ENCODE measurements at regions of chr7 and their contacts with region 1.

Region 1: DNA sequence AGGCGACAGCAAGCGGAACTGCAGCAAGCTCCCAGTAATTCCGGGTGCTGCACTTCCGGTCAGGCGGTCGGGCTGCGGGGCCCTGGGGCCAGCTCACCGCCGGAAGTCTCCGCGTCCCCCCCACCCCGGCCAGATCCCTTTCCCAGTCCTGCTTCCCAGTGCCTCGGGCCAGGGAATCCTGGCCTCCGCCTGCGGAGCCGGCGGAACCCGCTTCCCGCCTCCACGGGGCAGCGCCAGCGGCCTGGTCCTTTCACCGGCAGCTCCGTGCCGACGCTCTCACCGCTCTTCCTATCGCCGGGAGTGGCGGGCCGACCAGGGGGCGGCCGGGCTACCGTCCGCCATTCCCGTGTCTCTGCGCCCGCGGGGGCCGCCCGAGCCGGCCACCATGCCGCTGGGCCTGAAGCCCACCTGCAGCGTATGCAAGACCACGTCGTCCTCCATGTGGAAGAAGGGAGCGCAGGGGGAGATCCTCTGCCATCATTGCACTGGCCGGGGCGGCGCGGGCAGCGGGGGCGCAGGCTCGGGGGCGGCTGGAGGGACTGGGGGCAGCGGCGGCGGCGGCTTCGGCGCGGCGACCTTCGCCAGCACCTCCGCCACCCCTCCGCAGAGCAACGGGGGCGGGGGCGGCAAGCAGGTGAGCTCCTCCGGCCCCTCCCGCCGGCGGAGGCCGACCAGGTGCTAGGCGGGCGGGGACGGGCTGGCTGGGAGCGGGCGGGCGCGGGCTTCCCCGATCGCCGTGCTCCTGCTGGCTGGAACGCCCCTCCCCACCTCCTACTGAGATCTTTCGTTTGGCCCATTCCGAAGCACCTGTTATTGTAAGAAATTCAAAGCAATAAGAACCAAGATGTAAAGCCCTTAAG is at the start of gene GATAD1:
- DNase-seq: peak; percentile 88
- H3K4me3 Mint-ChIP-seq: peak within 1 kb of the TSS; percentile 84
- H3K27ac Mint-ChIP-seq: peak within 1 kb of the TSS; percentile 97
- H3K4me1 Mint-ChIP-seq: peaks cover 17% of the 10 kb centered on the region
- H3K27me3 Mint-ChIP-seq: no peaks in the 10 kb centered on the region
- total RNA-seq, gene GATAD1: 13.8 to 14.3 TPM

Region 2: DNA sequence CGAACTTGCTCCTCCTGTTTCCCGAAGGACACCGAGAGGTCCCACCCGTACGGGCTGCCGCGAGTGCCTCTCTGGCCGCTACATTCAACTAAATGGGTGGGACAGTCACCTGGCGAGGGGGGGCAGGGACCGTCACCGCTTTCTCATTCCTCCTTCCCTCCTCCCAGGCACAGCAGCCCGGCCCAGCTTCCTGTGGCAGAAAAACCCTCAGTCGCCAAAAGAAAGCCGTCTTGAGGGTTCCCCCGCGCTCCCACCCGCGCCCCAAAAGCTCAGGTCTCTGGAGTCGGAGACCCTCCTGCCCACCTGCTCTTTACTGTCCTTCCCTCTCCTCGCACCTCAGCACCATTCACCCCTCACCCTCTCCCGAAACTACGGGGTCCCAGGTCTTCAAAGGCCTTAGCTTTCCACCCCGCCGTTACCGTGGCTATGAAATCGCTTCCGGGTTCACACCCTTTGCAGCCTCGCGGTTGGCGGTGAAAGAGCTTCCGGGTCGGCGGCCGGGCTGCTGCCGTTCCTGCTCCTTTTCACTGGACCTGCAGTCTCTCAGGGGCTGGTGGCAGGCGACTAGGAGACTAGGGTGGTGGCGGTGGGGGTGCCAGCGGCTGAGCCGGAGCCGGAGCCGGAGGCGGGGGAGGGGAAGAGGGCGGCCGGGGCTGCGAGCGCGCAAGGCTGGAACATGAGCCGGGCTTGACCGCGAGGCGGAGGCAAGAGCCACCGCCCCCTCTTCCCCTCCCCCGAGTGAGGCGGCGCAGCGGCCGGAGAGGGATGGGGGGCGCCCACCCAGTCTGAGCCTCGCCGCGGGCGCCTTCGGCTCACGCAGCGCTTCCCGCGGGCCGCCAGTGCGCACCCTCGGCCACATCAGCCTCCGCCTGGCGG is 201.8 kb before region 1 on chr7 and contains the starts of genes ANKIB1 and KRIT1:
- CTCF ChIA-PET with region 1: interaction called, 14 read pairs
- POLR2A ChIA-PET with region 1: interaction called, 6 read pairs
- DNase-seq: peak; percentile 90
- H3K4me3 Mint-ChIP-seq: peak within 1 kb of the TSS; percentile 97
- H3K27ac Mint-ChIP-seq: peak within 1 kb of the TSS; percentile 99
- H3K4me1 Mint-ChIP-seq: peaks cover 39% of the 10 kb centered on the region
- H3K27me3 Mint-ChIP-seq: no peaks in the 10 kb centered on the region
- total RNA-seq, gene ANKIB1: 57.7 to 82.0 TPM
- total RNA-seq, gene KRIT1: 45.8 to 49.0 TPM

Region 3: GRCh38 chr7:92421676-92422435 is 25.7 kb before region 1 on chr7:
- CTCF ChIA-PET with region 1: interaction called, 49 read pairs
- POLR2A ChIA-PET with region 1: interaction called, 3 read pairs
- DNase-seq: no peak
- H3K4me3 Mint-ChIP-seq: no peak overlapping the region
- H3K27ac Mint-ChIP-seq: no peak overlapping the region
- H3K4me1 Mint-ChIP-seq: peaks cover 17% of the 10 kb centered on the region
- H3K27me3 Mint-ChIP-seq: peaks cover 4% of the 10 kb centered on the region

Measured in activated CD4-positive, alpha-beta T cell treated with anti-CD3 and anti-CD28 coated beads, Interleukin-2, amount 10 ng/mL, durations not matched to agents 7 days and 5 days (primary cell).